SK-N-SH (cell line): ENCODE measurements at regions of chr21 and their contacts with region 1.

Region 1: DNA sequence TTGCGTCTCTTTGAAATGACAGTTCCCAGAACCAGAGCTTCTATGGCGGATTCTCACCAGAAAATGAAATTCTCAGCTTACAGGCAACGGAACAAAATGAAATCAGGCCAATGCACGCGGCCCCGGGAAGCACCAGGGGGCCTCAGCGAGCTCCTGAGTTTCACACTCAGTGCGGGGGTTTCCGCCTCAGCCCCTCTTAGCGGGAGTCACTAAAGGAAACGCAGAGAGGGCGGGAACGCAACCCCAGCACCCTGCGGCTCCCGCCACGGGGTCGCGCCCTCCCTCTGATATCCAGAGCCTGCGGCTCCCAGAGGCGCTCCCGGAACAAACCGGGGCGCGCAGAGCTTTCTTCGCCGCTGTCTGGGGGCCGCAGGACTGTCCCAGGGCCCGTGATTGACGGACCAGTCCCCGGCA is 7.9 kb upstream of the COL6A1 start:
- DNase-seq: peak; percentile 90
- H3K4me3 ChIP-seq: peak overlapping the region; percentile 29 to 41; a peak in 3 of 4 replicates
- H3K27ac ChIP-seq: peak overlapping the region; percentile 27 to 98; a peak in 3 of 4 replicates
- H3K4me1 ChIP-seq: peaks cover 23 to 71% of the 10 kb centered on the region in 2 experiments; a peak in 3 of 4 replicates
- H3K27me3 ChIP-seq: no peaks in the 10 kb centered on the region
- CTCF ChIP-seq: peak; percentile 70
- EP300 ChIP-seq: no peak
- RAD21 ChIP-seq: peak; percentile 65

Region 2: DNA sequence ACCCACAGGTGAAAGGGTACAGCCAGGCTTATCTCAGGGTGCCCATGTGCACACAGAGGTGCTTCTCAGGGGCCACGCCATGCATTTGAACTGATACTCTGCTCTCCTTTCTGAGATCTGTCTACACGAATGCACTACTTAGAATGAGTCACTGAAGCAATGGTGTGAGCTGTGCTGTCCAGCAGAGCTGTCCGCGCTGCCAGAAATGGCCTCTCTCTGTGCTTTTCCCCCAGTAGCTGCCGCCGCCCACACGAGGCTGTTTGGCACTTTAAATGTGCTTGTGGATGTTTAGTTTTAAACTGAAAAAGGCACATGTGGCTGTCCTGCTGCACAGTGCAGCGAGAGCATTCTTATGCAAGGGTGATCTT is 79.2 kb before region 1 on chr21:
- CTCF ChIA-PET with region 1: interaction called, 4 read pairs
- POLR2A ChIA-PET with region 1: interaction called, 11 read pairs
- DNase-seq: peak; percentile 68
- H3K4me3 ChIP-seq: no peak overlapping the region; a peak in 1 of 4 replicates
- H3K27ac ChIP-seq: peak overlapping the region in 1 of 2 experiments; percentile 95; a peak in 2 of 4 replicates
- H3K4me1 ChIP-seq: peaks cover 0 to 58% of the 10 kb centered on the region in 2 experiments; a peak in 3 of 4 replicates
- H3K27me3 ChIP-seq: no peaks in the 10 kb centered on the region
- CTCF ChIP-seq: no peak
- EP300 ChIP-seq: no peak
- RAD21 ChIP-seq: no peak

Region 3: DNA sequence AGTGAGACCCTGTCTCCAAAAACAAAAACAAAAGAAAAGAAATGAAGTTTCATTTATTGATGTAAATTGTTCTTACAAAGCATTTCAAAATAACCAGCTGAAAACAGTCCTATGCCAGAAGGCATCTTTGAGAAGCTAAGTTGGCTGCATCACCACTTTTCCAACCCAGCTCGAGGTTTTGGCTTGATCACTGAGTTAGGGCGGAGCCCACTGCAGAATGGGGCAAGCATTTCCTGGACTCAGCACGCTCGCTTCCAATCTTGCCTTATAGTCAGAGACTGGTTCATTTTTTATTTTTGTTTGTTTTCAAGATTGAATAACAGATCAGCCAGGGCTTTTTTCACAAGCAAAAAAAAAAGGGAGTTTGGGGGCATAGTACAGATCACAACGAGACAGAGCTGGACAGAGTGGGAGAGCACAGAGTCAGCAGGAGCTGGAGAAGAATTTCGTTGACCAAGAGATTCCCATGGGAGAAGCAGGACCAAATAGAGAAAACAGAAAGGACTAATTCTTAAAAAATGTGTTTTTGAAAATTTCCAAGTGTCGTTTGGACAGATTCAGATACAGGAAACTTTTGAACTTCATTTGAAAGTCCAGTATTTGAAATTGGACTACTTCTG is 15.6 kb before region 1 on chr21:
- CTCF ChIA-PET with region 1: interaction called, 12 read pairs
- POLR2A ChIA-PET with region 1: no interaction called
- DNase-seq: no peak
- H3K4me3 ChIP-seq: no peak overlapping the region
- H3K27ac ChIP-seq: no peak overlapping the region
- H3K4me1 ChIP-seq: peaks cover 0 to 6% of the 10 kb centered on the region in 2 experiments; a peak in 1 of 4 replicates
- H3K27me3 ChIP-seq: no peaks in the 10 kb centered on the region
- CTCF ChIP-seq: no peak
- EP300 ChIP-seq: no peak
- RAD21 ChIP-seq: no peak

Region 4: GRCh38 chr21:46079352-46080170 is 105.9 kb after region 1 on chr21:
- CTCF ChIA-PET with region 1: interaction called, 8 read pairs
- POLR2A ChIA-PET with region 1: interaction called, 13 read pairs
- DNase-seq: peak; percentile 92
- H3K4me3 ChIP-seq: no peak overlapping the region
- H3K27ac ChIP-seq: peak overlapping the region; percentile 58 to 90
- H3K4me1 ChIP-seq: peaks cover 17 to 38% of the 10 kb centered on the region in 2 experiments; a peak in 3 of 4 replicates
- H3K27me3 ChIP-seq: no peaks in the 10 kb centered on the region
- CTCF ChIP-seq: no peak
- EP300 ChIP-seq: no peak; a peak in 2 of 4 replicates
- RAD21 ChIP-seq: no peak; the same call in 1 of the 2 replicates

Region 5: GRCh38 chr21:46097336-46098293 is 123.9 kb after region 1 on chr21 and contains the start of gene COL6A2:
- CTCF ChIA-PET with region 1: interaction called, 11 read pairs
- POLR2A ChIA-PET with region 1: interaction called, 4 read pairs
- DNase-seq: peak; percentile 97
- H3K4me3 ChIP-seq: peak within 1 kb of the TSS; percentile 66 to 67
- H3K27ac ChIP-seq: peak within 1 kb of the TSS in 1 of 2 experiments; percentile 59; a peak in 1 of 4 replicates
- H3K4me1 ChIP-seq: peaks cover 0 to 6% of the 10 kb centered on the region in 2 experiments; a peak in 1 of 4 replicates
- H3K27me3 ChIP-seq: no peaks in the 10 kb centered on the region
- CTCF ChIP-seq: peak; percentile 30
- EP300 ChIP-seq: no peak
- RAD21 ChIP-seq: peak; percentile 21; the same call in 1 of the 2 replicates
- polyA plus RNA-seq, gene COL6A2: 66.6 and 108 TPM in 2 replicates

Region 6: DNA sequence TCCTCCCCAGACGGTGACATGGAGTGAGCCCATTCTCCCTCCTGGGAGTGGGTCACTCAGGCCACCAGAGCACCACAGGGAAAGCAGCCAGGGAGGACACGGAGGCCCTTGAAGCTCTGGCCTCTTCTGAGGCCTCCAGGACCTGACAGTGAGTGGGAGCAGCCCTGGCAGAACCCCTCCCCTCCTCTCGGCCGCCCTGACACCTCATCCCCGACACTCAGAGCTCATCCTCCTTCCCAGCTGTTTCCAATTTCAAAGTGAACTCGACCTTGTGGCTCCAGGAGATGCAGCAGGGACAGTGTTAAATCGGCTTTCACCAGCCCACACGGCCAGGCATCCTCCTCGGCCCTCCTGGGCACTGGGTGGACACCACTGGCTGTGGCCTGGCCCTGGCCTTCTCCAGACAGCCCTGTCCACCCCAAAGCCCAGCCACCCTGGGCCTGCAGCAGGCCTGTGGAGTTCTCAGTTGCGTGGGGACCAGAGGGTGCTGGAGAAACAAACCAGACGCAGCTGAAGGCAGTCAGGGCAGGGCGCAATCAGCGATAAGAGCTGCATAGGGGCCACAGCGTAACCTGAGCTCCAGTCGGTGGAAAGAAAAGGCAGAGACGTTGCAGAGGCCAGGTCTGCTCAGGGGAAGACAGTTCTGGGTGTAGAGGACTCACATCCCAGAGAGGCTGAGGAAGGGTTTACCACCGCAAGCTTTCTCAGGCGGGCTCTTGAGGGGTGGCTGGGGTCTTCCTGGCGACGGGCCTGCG is 154.6 kb after region 1 on chr21:
- CTCF ChIA-PET with region 1: interaction called, 13 read pairs
- POLR2A ChIA-PET with region 1: interaction called, 10 read pairs
- DNase-seq: peak; percentile 89
- H3K4me3 ChIP-seq: no peak overlapping the region
- H3K27ac ChIP-seq: peak overlapping the region in 1 of 2 experiments; percentile 94; a peak in 2 of 4 replicates
- H3K4me1 ChIP-seq: peaks cover 0 to 41% of the 10 kb centered on the region in 2 experiments; a peak in 1 of 4 replicates
- H3K27me3 ChIP-seq: no peaks in the 10 kb centered on the region
- CTCF ChIP-seq: no peak
- EP300 ChIP-seq: peak in 1 of 2 experiments; percentile 58; a peak in 2 of 4 replicates
- RAD21 ChIP-seq: no peak